ENCODE measurements at regions of chr17 and their contacts with region 1.

Region 1: DNA sequence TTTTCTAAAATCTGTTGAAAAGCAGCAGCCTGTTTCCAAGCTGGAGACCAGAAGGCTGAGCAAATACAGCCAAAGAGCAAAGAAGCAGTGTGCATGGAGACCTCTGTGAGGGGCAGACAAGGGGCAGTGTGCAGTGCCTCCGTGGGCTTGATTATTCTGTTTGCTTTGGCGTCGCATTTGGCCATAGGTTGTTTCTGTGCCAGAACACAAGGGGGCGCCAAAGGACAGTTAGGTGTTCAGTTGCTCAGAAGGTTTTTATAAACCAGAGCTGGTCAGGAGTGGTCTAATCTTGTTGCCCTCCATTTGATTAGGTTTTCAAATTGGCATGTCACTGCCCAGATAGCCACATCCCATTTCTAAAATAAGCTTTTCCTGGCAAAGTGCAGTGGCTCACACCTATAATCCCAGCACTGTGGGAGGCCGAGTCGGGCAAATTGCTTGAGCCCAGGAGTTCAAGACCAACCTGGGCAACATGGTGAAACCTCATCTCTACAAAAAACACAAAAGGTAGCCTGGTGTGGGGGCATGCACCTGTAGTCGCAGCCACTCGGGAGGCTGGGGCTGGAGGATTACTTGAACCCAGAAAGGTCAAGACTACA is 10.6 kb downstream of the MYH3 start:
- DNase-seq: peak; percentile 79
- ATAC-seq: peak; percentile 65
- H3K4me3 Mint-ChIP-seq: no peak overlapping the region
- H3K27ac Mint-ChIP-seq: no peak overlapping the region
- H3K4me1 Mint-ChIP-seq: peaks cover 2% of the 10 kb centered on the region
- H3K27me3 Mint-ChIP-seq: no peaks in the 10 kb centered on the region

Region 2: DNA sequence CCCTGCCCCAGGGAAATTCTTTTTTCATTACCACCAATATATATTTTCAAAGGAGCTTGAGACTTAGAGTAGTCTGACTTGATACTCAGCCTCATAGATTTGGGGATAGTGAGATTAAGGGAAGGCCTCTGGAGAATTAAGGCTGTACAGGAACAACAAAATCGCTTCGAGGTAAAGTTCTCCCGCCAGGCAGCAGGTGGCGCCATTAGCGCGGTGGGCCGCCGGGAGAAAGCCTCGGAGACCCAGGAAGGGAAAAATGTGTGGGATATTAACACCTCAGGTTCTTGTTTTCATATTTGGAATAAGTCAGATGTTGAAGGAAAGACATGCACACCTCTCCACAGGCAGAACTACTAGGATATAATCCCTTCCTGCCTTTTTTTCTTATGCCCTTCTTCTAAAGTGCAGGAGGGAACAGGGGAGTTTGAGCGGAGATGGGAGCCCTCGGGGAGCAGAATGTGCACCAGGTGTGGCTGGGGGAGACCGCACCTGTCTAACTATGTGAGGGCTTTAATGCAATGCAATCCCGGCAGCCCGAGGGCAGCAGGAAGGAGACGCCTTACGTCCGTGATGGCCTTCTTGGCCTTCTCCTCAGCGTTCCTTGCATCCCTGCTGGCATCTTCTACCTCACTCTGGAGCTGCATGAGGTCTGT is 15.3 kb before region 1 on chr17:
- CTCF ChIA-PET with region 1: interaction called, 43 read pairs
- DNase-seq: peak; percentile 44
- ATAC-seq: no peak
- H3K4me3 Mint-ChIP-seq: no peak overlapping the region
- H3K27ac Mint-ChIP-seq: no peak overlapping the region
- H3K4me1 Mint-ChIP-seq: peaks cover 3% of the 10 kb centered on the region
- H3K27me3 Mint-ChIP-seq: no peaks in the 10 kb centered on the region

Region 3: GRCh38 chr17:10683853-10684252 is 37.4 kb after region 1 on chr17:
- CTCF ChIA-PET with region 1: interaction called, 19 read pairs
- DNase-seq: no peak
- ATAC-seq: no peak
- H3K4me3 Mint-ChIP-seq: no peak overlapping the region
- H3K27ac Mint-ChIP-seq: no peak overlapping the region
- H3K4me1 Mint-ChIP-seq: peaks cover 5% of the 10 kb centered on the region
- H3K27me3 Mint-ChIP-seq: no peaks in the 10 kb centered on the region

Region 4: DNA sequence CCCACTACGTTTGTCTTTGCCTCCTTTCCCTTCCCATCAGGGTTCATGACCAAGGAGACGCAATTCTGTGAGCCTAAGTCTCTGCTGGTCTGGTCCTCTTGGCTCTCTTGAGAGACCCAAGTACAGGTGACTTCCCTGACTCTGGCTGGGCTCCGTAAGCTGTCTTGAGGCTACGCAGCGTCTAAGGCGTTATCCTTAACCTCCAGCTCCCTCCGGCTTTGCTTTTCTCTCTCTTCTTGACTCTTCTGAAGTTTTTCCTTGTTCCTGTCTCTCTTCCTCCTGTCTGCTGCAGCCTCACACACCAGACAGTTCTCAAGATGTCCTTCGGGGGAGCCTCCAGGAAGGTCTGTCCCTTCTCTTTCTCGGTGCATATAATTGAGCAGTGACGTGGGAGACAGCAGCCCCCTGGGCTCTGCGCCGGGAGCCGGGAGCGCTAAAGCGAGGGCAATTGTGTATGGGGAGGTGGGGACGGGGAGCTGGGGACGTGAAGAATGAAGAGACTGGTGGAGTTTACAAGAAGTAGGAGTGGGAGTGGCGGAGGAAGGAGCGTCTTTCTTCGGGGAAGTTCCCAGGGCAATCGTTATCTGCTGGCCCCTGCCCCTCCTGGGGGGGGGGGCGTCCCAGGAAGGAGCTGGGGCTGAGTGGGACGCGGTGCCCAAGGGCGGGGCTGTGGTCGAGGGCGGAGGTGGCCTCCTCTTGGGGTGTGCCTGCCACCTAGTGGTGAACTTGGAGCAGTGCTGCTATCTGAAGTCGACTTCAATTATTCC is 198.3 kb after region 1 on chr17:
- CTCF ChIA-PET with region 1: interaction called, 35 read pairs
- DNase-seq: peak; percentile 77
- ATAC-seq: peak; percentile 92
- H3K4me3 Mint-ChIP-seq: peak overlapping the region; percentile 73
- H3K27ac Mint-ChIP-seq: no peak overlapping the region
- H3K4me1 Mint-ChIP-seq: peaks cover 5% of the 10 kb centered on the region
- H3K27me3 Mint-ChIP-seq: peaks cover 22% of the 10 kb centered on the region